Gastrocnemius medialis (tissue), 4 donors: ENCODE measurements at regions of chr18 and their contacts with region 1.

Region 1: DNA sequence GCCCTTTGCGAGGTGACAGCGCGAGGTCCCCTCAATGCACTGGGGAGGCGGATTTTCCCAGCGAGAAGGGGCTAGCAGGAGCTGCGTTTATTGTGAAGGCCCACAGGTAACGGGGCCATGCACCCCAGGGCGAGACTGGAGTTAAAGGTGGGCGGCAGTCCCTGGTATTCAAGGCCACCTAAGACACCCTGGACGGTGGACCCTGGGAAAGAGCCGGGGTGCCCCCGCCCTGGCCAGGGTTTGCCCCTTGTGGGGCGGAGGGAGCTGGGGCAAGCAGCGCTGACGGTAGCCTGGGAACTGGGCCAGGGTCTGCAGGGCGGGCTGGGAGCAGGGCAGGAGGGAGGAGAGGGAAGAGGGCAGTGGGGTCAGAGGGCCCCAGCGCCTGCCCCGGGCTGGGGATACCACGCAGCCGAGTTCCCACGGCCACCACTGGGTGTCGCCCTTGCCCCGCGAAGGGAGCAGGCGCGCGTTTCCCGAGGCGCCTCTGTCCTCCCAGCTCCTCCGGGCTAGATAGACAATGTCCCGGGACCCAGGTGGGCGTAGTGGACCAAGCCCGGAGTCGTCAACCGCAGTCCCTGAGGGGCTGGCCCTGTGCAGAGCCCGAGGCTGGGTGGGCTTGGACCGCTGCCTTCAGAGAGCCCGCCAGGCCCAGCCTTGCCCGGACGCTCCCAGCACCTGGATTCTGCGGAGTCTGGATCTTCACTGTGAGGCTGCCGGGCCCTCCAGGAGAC is 80.2 kb downstream of the SMAD4 start:
- DNase-seq: peak; percentile 9 to 17
- ATAC-seq: peak; percentile 68 to 85
- H3K4me3 ChIP-seq: peak overlapping the region in 1 of 4 donors; percentile 39
- H3K27ac ChIP-seq: no peak overlapping the region
- H3K4me1 ChIP-seq: no peaks in the 10 kb centered on the region
- H3K27me3 ChIP-seq: no peaks in the 10 kb centered on the region
- CTCF ChIP-seq: peak; percentile 89 to 98 (median 94)
- POLR2A ChIP-seq: no peak

Region 2: GRCh38 chr18:51082571-51083267 is 27.5 kb before region 1 on chr18:
- in situ Hi-C with region 1: no loop called
- intact Hi-C with region 1: no loop called
- DNase-seq: no peak
- ATAC-seq: no peak
- H3K4me3 ChIP-seq: no peak overlapping the region
- H3K27ac ChIP-seq: no peak overlapping the region
- H3K4me1 ChIP-seq: peaks cover 0 to 3% of the 10 kb centered on the region in 2 donors
- H3K27me3 ChIP-seq: no peaks in the 10 kb centered on the region
- CTCF ChIP-seq: no peak
- POLR2A ChIP-seq: no peak

Region 3: GRCh38 chr18:51383116-51383515 is 272.9 kb after region 1 on chr18:
- in situ Hi-C with region 1: loop called (anchors 25 kb)
- intact Hi-C with region 1: loop called (anchors 10 kb)
- DNase-seq: no peak
- ATAC-seq: no peak
- H3K4me3 ChIP-seq: no peak overlapping the region
- H3K27ac ChIP-seq: no peak overlapping the region
- H3K4me1 ChIP-seq: no peaks in the 10 kb centered on the region
- H3K27me3 ChIP-seq: no peaks in the 10 kb centered on the region
- CTCF ChIP-seq: no peak
- POLR2A ChIP-seq: no peak

Region 4: GRCh38 chr18:51390702-51391101 is 280.5 kb after region 1 on chr18:
- in situ Hi-C with region 1: loop called (anchors 25 kb)
- intact Hi-C with region 1: loop called (anchors 10 kb)
- DNase-seq: no peak
- ATAC-seq: no peak
- H3K4me3 ChIP-seq: no peak overlapping the region
- H3K27ac ChIP-seq: no peak overlapping the region
- H3K4me1 ChIP-seq: no peaks in the 10 kb centered on the region
- H3K27me3 ChIP-seq: no peaks in the 10 kb centered on the region
- CTCF ChIP-seq: no peak
- POLR2A ChIP-seq: no peak

Region 5: DNA sequence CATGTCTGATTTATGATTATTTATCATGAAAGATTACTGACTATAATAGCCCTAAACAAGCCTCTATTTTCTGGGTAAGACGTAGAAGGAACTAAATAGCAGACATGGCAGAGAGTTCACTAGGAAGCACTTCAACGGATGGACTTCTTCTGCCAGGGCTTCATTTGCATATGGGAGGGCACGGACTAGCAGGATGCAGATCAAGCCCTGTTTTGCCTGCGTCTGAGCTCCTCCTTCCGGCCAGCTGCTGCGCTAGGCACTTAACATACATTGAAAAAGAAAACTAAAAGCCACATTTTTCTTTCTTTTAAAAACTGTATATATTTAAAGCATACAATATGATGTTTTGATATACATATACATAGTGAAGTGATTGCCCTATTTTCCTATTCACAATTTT is 427.2 kb after region 1 on chr18:
- in situ Hi-C with region 1: loop called in 1 of 4 experiments (anchors 25 kb)
- intact Hi-C with region 1: no loop called
- DNase-seq: no peak
- ATAC-seq: no peak
- H3K4me3 ChIP-seq: no peak overlapping the region
- H3K27ac ChIP-seq: no peak overlapping the region
- H3K4me1 ChIP-seq: no peaks in the 10 kb centered on the region
- H3K27me3 ChIP-seq: no peaks in the 10 kb centered on the region
- CTCF ChIP-seq: no peak
- POLR2A ChIP-seq: no peak

Region 6: GRCh38 chr18:51639541-51639940 is 529.3 kb after region 1 on chr18:
- in situ Hi-C with region 1: no loop called
- intact Hi-C with region 1: no loop called
- DNase-seq: no peak
- ATAC-seq: no peak
- H3K4me3 ChIP-seq: no peak overlapping the region
- H3K27ac ChIP-seq: no peak overlapping the region
- H3K4me1 ChIP-seq: no peaks in the 10 kb centered on the region
- H3K27me3 ChIP-seq: no peaks in the 10 kb centered on the region
- CTCF ChIP-seq: no peak
- POLR2A ChIP-seq: no peak